ENCODE measurements at regions of chr1 and their contacts with region 1.

Region 1: GRCh38 chr1:167599957-167600581 is 30.0 kb upstream of the RCSD1 start:
- DNase-seq: peak; percentile 75
- H3K4me3 Mint-ChIP-seq: no peak overlapping the region
- H3K27ac Mint-ChIP-seq: no peak overlapping the region
- H3K4me1 Mint-ChIP-seq: peaks cover 10% of the 10 kb centered on the region
- H3K27me3 Mint-ChIP-seq: no peaks in the 10 kb centered on the region
- CTCF ChIP-seq: peak; percentile 73

Region 2: DNA sequence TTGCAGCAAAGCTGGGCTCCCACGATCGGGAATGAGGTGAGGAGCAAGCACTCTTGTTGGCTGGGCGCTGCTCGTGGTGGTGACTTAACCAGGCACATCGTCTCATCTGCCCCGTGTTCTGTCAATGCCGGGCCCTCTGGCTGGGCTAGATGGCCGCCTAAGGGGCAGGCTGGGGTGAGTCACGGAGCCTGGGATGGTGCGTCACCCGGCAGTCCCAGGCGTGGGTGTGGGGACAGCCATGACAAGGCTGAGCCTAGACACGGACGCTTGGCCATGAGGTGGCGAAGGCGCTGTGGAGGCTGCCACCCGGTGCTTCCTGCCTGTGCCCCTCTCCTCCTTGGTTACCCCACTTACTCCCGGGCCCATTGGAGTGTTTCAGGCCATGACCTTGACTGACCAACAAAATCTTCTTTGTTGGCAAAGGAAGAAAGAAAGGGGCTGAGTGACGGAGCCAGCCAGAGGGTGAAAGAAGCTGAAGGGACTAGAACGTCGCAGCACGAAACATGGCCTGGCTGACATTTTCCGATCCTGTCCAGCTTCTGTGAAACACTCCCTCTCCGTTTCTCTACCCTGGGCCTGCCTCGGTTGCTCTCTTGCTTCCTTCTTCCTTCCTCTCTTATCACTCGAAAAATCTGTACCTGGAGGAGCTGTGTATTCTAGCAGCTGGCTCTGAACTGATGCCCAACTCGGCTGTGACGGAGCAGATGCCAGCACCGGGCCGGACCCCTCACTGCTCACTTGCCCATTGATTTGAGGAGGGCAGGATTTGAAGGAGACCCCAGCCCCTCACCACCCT is 82.3 kb before region 1 on chr1:
- CTCF ChIA-PET with region 1: no interaction called
- POLR2A ChIA-PET with region 1: no interaction called
- intact Hi-C with region 1: no loop called
- DNase-seq: peak; percentile 88
- H3K4me3 Mint-ChIP-seq: no peak overlapping the region
- H3K27ac Mint-ChIP-seq: no peak overlapping the region
- H3K4me1 Mint-ChIP-seq: no peaks in the 10 kb centered on the region
- H3K27me3 Mint-ChIP-seq: no peaks in the 10 kb centered on the region
- CTCF ChIP-seq: no peak

Region 3: DNA sequence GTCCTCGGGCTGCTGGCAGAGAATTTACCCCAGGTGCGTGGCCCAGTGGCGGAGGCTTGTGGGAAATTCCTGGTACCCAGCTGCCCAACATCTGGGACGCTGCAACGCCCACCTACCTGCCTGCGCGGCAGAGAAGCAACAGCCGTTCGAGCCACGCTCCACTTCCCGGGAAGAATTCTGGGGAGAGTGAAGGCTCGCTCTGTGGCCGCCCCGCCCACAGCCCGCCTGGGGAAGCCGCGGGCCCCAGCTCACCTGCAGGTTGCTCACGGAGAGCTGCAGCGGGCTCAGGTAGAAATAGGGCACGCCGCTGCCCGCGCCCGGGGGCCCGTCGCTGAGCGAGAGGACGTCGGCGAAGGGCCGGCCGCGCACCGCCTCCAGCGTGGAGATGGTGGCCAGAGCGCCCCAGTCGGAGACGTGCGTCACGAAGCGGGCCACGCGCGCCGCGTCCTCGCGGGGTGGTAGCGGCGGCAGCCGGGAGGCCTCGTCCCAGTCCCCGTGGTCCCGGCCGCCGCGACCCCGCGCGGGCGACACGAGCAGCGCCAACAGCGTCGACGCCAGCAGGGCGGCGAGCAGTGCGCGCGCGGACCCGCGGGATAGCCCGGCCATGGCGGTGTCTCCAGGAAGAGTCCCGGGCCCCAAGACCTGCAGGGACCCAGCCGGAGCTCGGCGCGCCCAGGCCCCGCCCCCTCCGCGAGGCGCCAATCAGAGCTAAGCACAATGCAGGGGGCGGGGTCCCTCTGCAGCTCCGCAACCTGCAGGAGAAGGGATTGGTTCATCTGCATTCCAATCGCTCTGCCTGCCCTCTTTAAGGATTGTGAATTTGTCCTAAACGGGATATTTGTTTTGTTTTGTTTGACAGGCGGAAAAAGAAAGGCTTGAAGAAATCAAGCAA is 46.7 kb before region 1 on chr1 and contains the start of gene CREG1:
- CTCF ChIA-PET with region 1: interaction called, 8 read pairs
- POLR2A ChIA-PET with region 1: interaction called, 13 read pairs
- intact Hi-C with region 1: no loop called
- DNase-seq: peak; percentile 98
- H3K4me3 Mint-ChIP-seq: peak within 1 kb of the TSS; percentile 87
- H3K27ac Mint-ChIP-seq: peak within 1 kb of the TSS; percentile 36
- H3K4me1 Mint-ChIP-seq: peaks cover 59% of the 10 kb centered on the region
- H3K27me3 Mint-ChIP-seq: no peaks in the 10 kb centered on the region
- CTCF ChIP-seq: no peak
- total RNA-seq, gene CREG1: 136 and 154 TPM in 2 replicates

Region 4: GRCh38 chr1:167584581-167584980 is 15.5 kb before region 1 on chr1:
- CTCF ChIA-PET with region 1: interaction called, 14 read pairs
- POLR2A ChIA-PET with region 1: no interaction called
- intact Hi-C with region 1: no loop called
- DNase-seq: no peak
- H3K4me3 Mint-ChIP-seq: no peak overlapping the region
- H3K27ac Mint-ChIP-seq: no peak overlapping the region
- H3K4me1 Mint-ChIP-seq: peaks cover 7% of the 10 kb centered on the region
- H3K27me3 Mint-ChIP-seq: no peaks in the 10 kb centered on the region
- CTCF ChIP-seq: no peak

Region 5: GRCh38 chr1:167663002-167663772 is 63.1 kb after region 1 on chr1:
- CTCF ChIA-PET with region 1: interaction called, 31 read pairs
- POLR2A ChIA-PET with region 1: interaction called, 19 read pairs
- intact Hi-C with region 1: no loop called
- DNase-seq: peak; percentile 99
- H3K4me3 Mint-ChIP-seq: peak overlapping the region; percentile 51
- H3K27ac Mint-ChIP-seq: peak overlapping the region; percentile 71
- H3K4me1 Mint-ChIP-seq: peaks cover 71% of the 10 kb centered on the region
- H3K27me3 Mint-ChIP-seq: no peaks in the 10 kb centered on the region
- CTCF ChIP-seq: no peak

Region 6: GRCh38 chr1:167681451-167682098 is 81.5 kb after region 1 on chr1:
- CTCF ChIA-PET with region 1: interaction called, 400 read pairs
- POLR2A ChIA-PET with region 1: interaction called, 52 read pairs
- intact Hi-C with region 1: loop called (anchors 1 kb)
- DNase-seq: no peak
- H3K4me3 Mint-ChIP-seq: no peak overlapping the region
- H3K27ac Mint-ChIP-seq: no peak overlapping the region
- H3K4me1 Mint-ChIP-seq: peaks cover 17% of the 10 kb centered on the region
- H3K27me3 Mint-ChIP-seq: no peaks in the 10 kb centered on the region
- CTCF ChIP-seq: no peak

Region 7: DNA sequence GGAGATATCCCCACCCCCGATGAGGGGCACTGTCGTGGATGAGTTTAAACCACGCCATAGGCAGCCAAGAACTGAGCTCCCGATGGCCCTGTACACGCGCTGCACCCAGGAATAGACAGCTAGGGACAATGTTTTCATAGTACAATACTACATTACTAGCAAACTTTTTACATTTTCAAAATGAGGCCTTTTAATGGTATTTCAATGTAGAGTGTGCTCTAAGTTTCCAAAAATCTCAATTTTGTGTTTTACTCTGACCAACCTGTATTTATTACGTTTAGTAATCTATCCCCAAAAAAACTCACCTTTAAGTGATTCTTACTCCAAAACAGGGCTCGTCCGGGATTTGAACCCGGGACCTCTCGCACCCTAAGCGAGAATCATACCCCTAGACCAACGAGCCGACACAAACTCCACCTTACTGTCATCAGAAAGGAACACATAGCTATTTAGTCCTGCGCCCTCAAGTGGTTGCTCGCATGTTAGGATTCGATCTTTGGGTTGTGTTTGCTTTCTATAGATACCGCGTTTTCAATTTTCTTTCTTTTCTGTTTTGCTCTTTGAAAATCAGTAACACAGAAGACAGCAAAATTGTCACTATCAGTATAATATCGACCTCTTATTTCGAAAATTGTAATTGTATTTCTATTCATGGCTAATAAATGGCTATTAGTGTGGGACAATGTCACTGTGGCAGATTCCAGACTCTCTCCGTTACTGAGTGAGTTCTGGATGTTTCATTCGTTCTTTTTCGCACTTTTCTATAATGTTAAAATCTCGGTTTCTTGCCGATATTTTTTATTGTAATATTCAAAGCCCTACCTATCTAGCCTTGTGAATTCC is 115.3 kb after region 1 on chr1:
- CTCF ChIA-PET with region 1: interaction called, 28 read pairs
- POLR2A ChIA-PET with region 1: interaction called, 5 read pairs
- intact Hi-C with region 1: no loop called
- DNase-seq: peak; percentile 97
- H3K4me3 Mint-ChIP-seq: peak overlapping the region; percentile 88
- H3K27ac Mint-ChIP-seq: peak overlapping the region; percentile 91
- H3K4me1 Mint-ChIP-seq: peaks cover 16% of the 10 kb centered on the region
- H3K27me3 Mint-ChIP-seq: no peaks in the 10 kb centered on the region
- CTCF ChIP-seq: peak; percentile 98

Region 8: DNA sequence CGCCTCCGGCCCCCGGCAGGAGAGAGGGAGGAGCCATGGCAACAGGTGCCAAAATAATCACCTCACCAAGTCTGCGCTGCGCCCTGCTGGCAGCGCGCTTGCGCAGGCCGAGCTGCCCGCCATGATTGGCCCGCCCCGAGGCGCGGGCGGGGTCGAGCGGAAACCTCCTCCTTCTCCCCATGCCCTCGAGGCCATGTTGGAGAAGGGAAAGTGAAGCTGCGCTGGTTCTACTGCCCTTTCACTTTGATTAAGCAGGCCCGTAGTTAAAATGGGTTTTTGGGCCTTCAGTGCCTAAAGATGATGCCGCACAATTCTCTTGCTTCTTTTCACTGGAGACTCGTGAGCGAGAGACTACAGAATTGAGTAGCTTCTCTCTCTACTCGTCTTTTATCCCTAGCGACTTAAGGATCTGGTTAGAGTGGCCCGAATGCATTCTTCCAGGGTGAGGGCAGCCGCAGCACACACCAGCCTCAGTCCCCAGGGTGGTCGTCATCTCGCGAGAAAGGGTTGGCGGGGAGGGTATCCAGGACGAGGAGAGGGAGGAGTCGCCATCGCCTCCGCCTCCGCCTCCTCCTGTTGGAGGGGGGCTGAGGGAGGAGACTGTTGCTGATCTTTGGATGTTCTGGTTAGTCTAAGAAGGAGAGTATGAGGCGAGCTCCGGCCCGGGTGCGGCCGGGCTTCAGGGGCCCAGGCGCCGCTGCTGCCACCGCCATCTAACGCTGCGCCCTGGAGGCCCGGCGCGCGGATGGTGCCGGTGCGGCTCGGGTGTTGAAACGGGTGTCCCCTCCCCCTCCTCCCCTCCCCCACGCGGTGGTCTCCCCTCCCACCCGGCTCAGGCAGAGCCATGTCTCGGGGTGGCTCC is 336.2 kb after region 1 on chr1 and contains the start of gene DCAF6:
- CTCF ChIA-PET with region 1: no interaction called
- POLR2A ChIA-PET with region 1: no interaction called
- intact Hi-C with region 1: loop called (anchors 2 kb)
- DNase-seq: peak; percentile 100
- H3K4me3 Mint-ChIP-seq: peak within 1 kb of the TSS; percentile 81
- H3K27ac Mint-ChIP-seq: peak within 1 kb of the TSS; percentile 85
- H3K4me1 Mint-ChIP-seq: peaks cover 18% of the 10 kb centered on the region
- H3K27me3 Mint-ChIP-seq: no peaks in the 10 kb centered on the region
- CTCF ChIP-seq: no peak
- total RNA-seq, gene DCAF6: 57.2 and 60.8 TPM in 2 replicates